Mammary epithelial cell (primary cell): ENCODE measurements at regions of chr10 and their contacts with region 1.

Region 1: GRCh38 chr10:77898647-77899477 is 27.7 kb downstream of the DLG5 start:
- DNase-seq: peak; percentile 98
- H3K4me3 ChIP-seq: peak overlapping the region in 2 of 3 experiments; percentile 12 to 18
- H3K27ac ChIP-seq: peak overlapping the region; percentile 83
- H3K4me1 ChIP-seq: peaks cover 33% of the 10 kb centered on the region
- H3K27me3 ChIP-seq: no peaks in the 10 kb centered on the region
- CTCF ChIP-seq: no peak

Region 2: GRCh38 chr10:77873536-77874380 is 25.1 kb before region 1 on chr10:
- CTCF ChIA-PET with region 1: no interaction called
- dilution Hi-C with region 1: no loop called
- in situ Hi-C with region 1: no loop called
- intact Hi-C with region 1: loop called (anchors 1 kb)
- DNase-seq: peak; percentile 91
- H3K4me3 ChIP-seq: peak overlapping the region in 1 of 3 experiments; percentile 8
- H3K27ac ChIP-seq: peak overlapping the region; percentile 78
- H3K4me1 ChIP-seq: peaks cover 74% of the 10 kb centered on the region
- H3K27me3 ChIP-seq: no peaks in the 10 kb centered on the region
- CTCF ChIP-seq: no peak

Region 3: DNA sequence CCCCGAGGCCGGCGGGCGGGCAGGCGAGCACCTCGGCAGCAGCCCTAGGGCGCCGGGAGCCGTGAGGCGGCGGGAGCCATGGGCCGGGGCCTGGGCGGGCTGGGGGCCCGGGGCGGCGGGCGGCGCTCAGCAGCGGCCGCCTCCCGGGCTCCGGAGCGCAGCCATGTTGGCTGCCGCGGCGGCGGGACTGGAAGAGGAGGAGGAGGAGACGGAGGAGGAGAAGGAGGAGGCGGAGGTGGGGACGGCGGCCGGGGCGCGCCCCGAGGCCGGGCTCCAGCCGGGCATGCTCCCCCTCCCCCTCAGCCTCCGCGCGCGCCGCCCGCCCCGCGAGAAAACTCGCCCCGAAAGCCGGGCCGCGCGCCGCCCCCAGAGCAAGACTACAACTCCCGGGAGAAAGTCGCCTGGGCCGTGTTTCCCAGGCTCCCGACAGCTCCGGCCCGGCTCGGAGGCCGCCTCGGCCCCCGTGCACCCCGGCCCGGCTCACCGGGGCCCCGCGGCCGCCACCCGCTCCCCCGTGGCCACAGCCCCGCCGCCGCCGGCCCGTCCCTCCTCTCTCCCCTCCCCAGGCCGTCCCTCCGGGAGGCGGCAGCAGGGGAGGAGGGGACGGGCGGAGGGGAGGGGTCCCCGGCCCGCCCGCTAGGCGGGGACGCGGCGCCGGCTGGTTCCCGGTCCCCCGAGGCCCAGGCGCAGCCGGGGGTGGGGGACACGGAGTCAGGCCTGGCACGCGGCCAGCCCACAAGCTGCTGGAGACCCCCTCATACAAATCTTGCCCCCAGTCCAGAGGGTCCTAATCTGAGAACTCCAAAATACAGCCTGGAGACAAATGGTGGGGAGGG is 27.9 kb after region 1 on chr10 and contains the start of gene DLG5:
- CTCF ChIA-PET with region 1: no interaction called
- dilution Hi-C with region 1: no loop called
- in situ Hi-C with region 1: no loop called
- intact Hi-C with region 1: loop called (anchors 2 kb)
- DNase-seq: peak; percentile 42
- H3K4me3 ChIP-seq: peak within 1 kb of the TSS; percentile 71 to 87 (median 76)
- H3K27ac ChIP-seq: peak within 1 kb of the TSS; percentile 40
- H3K4me1 ChIP-seq: peaks cover 34% of the 10 kb centered on the region
- H3K27me3 ChIP-seq: no peaks in the 10 kb centered on the region
- CTCF ChIP-seq: no peak
- total RNA-seq, gene DLG5: 40.8 to 76.5 TPM

Region 4: GRCh38 chr10:77949167-77949566 is 50.3 kb after region 1 on chr10:
- CTCF ChIA-PET with region 1: no interaction called
- dilution Hi-C with region 1: no loop called
- in situ Hi-C with region 1: no loop called
- intact Hi-C with region 1: loop called (anchors 2 kb)
- DNase-seq: peak; percentile 97
- H3K4me3 ChIP-seq: no peak overlapping the region
- H3K27ac ChIP-seq: peak overlapping the region; percentile 59
- H3K4me1 ChIP-seq: peaks cover 18% of the 10 kb centered on the region
- H3K27me3 ChIP-seq: no peaks in the 10 kb centered on the region
- CTCF ChIP-seq: no peak

Region 5: GRCh38 chr10:78029269-78030226 is 130.7 kb after region 1 on chr10 and contains the start of gene POLR3A:
- CTCF ChIA-PET with region 1: interaction called, 4 read pairs
- dilution Hi-C with region 1: no loop called
- in situ Hi-C with region 1: no loop called
- intact Hi-C with region 1: loop called (anchors 5 kb)
- DNase-seq: peak; percentile 96
- H3K4me3 ChIP-seq: peak within 1 kb of the TSS; percentile 87 to 94 (median 87)
- H3K27ac ChIP-seq: peak within 1 kb of the TSS; percentile 74
- H3K4me1 ChIP-seq: peaks cover 38% of the 10 kb centered on the region
- H3K27me3 ChIP-seq: no peaks in the 10 kb centered on the region
- CTCF ChIP-seq: peak; percentile 53 to 72
- total RNA-seq, gene POLR3A: 20.8 to 21.2 TPM